ENCODE measurements at regions of chr3 and their contacts with region 1.

Region 1: GRCh38 chr3:60809857-60810610 is 441.2 kb downstream of the FHIT start:
- DNase-seq: no peak
- H3K4me3 ChIP-seq: no peak overlapping the region
- H3K27ac ChIP-seq: no peak overlapping the region
- H3K4me1 ChIP-seq: no peaks in the 10 kb centered on the region
- H3K27me3 ChIP-seq: no peaks in the 10 kb centered on the region
- CTCF ChIP-seq: no peak
- POLR2A ChIP-seq: no peak

Region 2: GRCh38 chr3:58948018-58948417 is 1862.0 kb before region 1 on chr3:
- intact Hi-C with region 1: loop called (anchors 10 kb)
- DNase-seq: no peak
- H3K4me3 ChIP-seq: no peak overlapping the region
- H3K27ac ChIP-seq: no peak overlapping the region
- H3K4me1 ChIP-seq: no peaks in the 10 kb centered on the region
- H3K27me3 ChIP-seq: no peaks in the 10 kb centered on the region
- CTCF ChIP-seq: no peak
- POLR2A ChIP-seq: no peak

Region 3: GRCh38 chr3:60775987-60776386 is 34.0 kb before region 1 on chr3:
- intact Hi-C with region 1: no loop called
- DNase-seq: no peak
- H3K4me3 ChIP-seq: no peak overlapping the region
- H3K27ac ChIP-seq: no peak overlapping the region
- H3K4me1 ChIP-seq: no peaks in the 10 kb centered on the region
- H3K27me3 ChIP-seq: no peaks in the 10 kb centered on the region
- CTCF ChIP-seq: no peak
- POLR2A ChIP-seq: no peak